ENCODE measurements at regions of chr10 and their contacts with region 1.

Region 1: GRCh38 chr10:6202684-6203330 is at the start of gene PFKFB3:
- DNase-seq: peak; percentile 81
- ATAC-seq: peak; percentile 86
- H3K4me3 ChIP-seq: peak within 1 kb of the TSS; percentile 64 to 93 (median 79)
- H3K27ac ChIP-seq: no peak within 1 kb of the TSS
- H3K4me1 ChIP-seq: peaks cover 36% of the 10 kb centered on the region
- H3K27me3 ChIP-seq: peaks cover 0 to 11% of the 10 kb centered on the region in 2 experiments; a peak in 1 of 5 replicates
- CTCF ChIP-seq: peak; percentile 89
- EP300 ChIP-seq: no peak; a peak in 1 of 4 replicates
- POLR2A ChIP-seq: peak in 1 of 2 experiments; percentile 92; a peak in 2 of 4 replicates
- RAD21 ChIP-seq: peak; percentile 93
- total RNA-seq, gene PFKFB3: 0.87 and 1.2 TPM in 2 replicates

Region 2: DNA sequence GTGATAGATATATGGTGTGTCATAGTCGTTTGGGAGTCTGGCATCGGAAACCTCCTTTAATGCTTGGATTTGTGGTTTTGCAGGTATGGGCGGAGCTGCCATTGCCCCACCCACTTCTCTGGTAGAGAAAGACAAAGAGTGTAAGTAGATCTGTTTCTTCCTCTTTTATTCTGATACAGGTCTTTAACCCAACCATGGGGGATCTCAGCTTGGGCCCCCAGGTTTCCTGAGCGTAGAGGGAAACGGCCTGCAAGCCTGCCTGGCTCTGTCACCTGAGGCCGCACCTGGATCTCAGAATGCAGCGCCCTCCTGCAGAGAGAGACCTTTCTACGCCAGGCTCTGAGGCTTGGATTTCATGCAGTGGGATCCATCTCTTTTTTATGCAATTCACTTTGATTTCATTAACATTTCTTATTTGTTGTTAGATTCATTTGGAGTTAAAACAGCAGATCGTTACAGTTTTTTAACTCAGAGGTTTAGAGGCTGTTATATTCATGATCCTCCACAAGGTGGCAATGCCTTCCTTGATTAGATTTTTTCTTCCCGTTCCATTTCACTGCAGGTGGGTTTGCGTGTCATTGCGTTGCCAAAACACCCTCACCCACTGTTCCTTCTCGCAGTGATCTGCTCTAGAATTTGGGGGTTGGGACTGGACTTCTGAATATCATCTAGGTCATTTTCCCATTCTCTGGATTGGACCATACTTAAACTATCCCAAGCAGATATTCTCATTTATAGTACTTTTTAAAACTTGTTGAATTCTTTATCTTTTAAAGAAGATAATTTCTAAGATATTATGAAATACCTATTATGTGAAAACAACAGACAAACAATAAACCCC is 94.0 kb before region 1 on chr10:
- CTCF ChIA-PET with region 1: no interaction called
- POLR2A ChIA-PET with region 1: no interaction called
- in situ Hi-C with region 1: no loop called
- intact Hi-C with region 1: loop called (anchors 1 kb)
- DNase-seq: peak; percentile 42
- ATAC-seq: no peak
- H3K4me3 ChIP-seq: no peak overlapping the region
- H3K27ac ChIP-seq: no peak overlapping the region
- H3K4me1 ChIP-seq: peaks cover 13% of the 10 kb centered on the region
- H3K27me3 ChIP-seq: no peaks in the 10 kb centered on the region
- CTCF ChIP-seq: peak; percentile 67
- EP300 ChIP-seq: no peak
- POLR2A ChIP-seq: no peak
- RAD21 ChIP-seq: peak; percentile 50; the same call in 1 of the 2 replicates

Region 3: GRCh38 chr10:6163364-6164270 is 39.2 kb before region 1 on chr10:
- CTCF ChIA-PET with region 1: no interaction called
- POLR2A ChIA-PET with region 1: no interaction called
- in situ Hi-C with region 1: no loop called
- intact Hi-C with region 1: no loop called
- DNase-seq: no peak
- ATAC-seq: no peak
- H3K4me3 ChIP-seq: no peak overlapping the region
- H3K27ac ChIP-seq: no peak overlapping the region
- H3K4me1 ChIP-seq: no peaks in the 10 kb centered on the region
- H3K27me3 ChIP-seq: 0 out of 5 replicates have a peak, but pooled peaks cover 0 to 2% of the 10 kb centered on the region in 2 experiments
- CTCF ChIP-seq: no peak
- EP300 ChIP-seq: no peak
- POLR2A ChIP-seq: no peak
- RAD21 ChIP-seq: no peak

Region 4: GRCh38 chr10:6275022-6275997 is 72.5 kb after region 1 on chr10:
- CTCF ChIA-PET with region 1: no interaction called
- POLR2A ChIA-PET with region 1: interaction called, 3 read pairs
- in situ Hi-C with region 1: no loop called
- intact Hi-C with region 1: loop called (anchors 5 kb)
- DNase-seq: peak; percentile 53
- ATAC-seq: no peak
- H3K4me3 ChIP-seq: no peak overlapping the region
- H3K27ac ChIP-seq: no peak overlapping the region
- H3K4me1 ChIP-seq: peaks cover 69% of the 10 kb centered on the region
- H3K27me3 ChIP-seq: 0 out of 5 replicates have a peak, but pooled peaks cover 0 to 16% of the 10 kb centered on the region in 2 experiments
- CTCF ChIP-seq: no peak
- EP300 ChIP-seq: no peak
- POLR2A ChIP-seq: no peak
- RAD21 ChIP-seq: no peak

Measured in HepG2 (cell line).